ENCODE measurements at regions of chr10 and their contacts with region 1.

Region 1: GRCh38 chr10:63554657-63555056 is 33.5 kb downstream of the REEP3 start:
- DNase-seq: peak; percentile 82
- H3K4me3 ChIP-seq: peak overlapping the region in 1 of 3 experiments; percentile 2
- H3K27ac ChIP-seq: peak overlapping the region; percentile 100
- H3K4me1 ChIP-seq: peaks cover 37% of the 10 kb centered on the region
- H3K27me3 ChIP-seq: no peaks in the 10 kb centered on the region
- CTCF ChIP-seq: no peak

Region 2: GRCh38 chr10:63396133-63396761 is 158.4 kb before region 1 on chr10:
- CTCF ChIA-PET with region 1: no interaction called
- dilution Hi-C with region 1: no loop called
- in situ Hi-C with region 1: no loop called
- intact Hi-C with region 1: no loop called
- DNase-seq: no peak
- H3K4me3 ChIP-seq: no peak overlapping the region
- H3K27ac ChIP-seq: no peak overlapping the region
- H3K4me1 ChIP-seq: no peaks in the 10 kb centered on the region
- H3K27me3 ChIP-seq: no peaks in the 10 kb centered on the region
- CTCF ChIP-seq: no peak

Region 3: GRCh38 chr10:63515002-63515763 is 39.5 kb before region 1 on chr10:
- CTCF ChIA-PET with region 1: no interaction called
- dilution Hi-C with region 1: loop called (anchors 5 kb)
- in situ Hi-C with region 1: no loop called
- intact Hi-C with region 1: loop called (anchors 1 kb)
- DNase-seq: peak; percentile 74
- H3K4me3 ChIP-seq: peak overlapping the region; percentile 3 to 35 (median 33)
- H3K27ac ChIP-seq: peak overlapping the region; percentile 94
- H3K4me1 ChIP-seq: peaks cover 36% of the 10 kb centered on the region
- H3K27me3 ChIP-seq: no peaks in the 10 kb centered on the region
- CTCF ChIP-seq: no peak

Region 4: GRCh38 chr10:63521416-63522276 is 33.0 kb before region 1 on chr10:
- CTCF ChIA-PET with region 1: no interaction called
- dilution Hi-C with region 1: loop called (anchors 5 kb)
- in situ Hi-C with region 1: no loop called
- intact Hi-C with region 1: loop called (anchors 1 kb)
- DNase-seq: peak; percentile 66
- H3K4me3 ChIP-seq: peak overlapping the region; percentile 91 to 95 (median 92)
- H3K27ac ChIP-seq: peak overlapping the region; percentile 90
- H3K4me1 ChIP-seq: peaks cover 27% of the 10 kb centered on the region
- H3K27me3 ChIP-seq: no peaks in the 10 kb centered on the region
- CTCF ChIP-seq: no peak

Region 5: DNA sequence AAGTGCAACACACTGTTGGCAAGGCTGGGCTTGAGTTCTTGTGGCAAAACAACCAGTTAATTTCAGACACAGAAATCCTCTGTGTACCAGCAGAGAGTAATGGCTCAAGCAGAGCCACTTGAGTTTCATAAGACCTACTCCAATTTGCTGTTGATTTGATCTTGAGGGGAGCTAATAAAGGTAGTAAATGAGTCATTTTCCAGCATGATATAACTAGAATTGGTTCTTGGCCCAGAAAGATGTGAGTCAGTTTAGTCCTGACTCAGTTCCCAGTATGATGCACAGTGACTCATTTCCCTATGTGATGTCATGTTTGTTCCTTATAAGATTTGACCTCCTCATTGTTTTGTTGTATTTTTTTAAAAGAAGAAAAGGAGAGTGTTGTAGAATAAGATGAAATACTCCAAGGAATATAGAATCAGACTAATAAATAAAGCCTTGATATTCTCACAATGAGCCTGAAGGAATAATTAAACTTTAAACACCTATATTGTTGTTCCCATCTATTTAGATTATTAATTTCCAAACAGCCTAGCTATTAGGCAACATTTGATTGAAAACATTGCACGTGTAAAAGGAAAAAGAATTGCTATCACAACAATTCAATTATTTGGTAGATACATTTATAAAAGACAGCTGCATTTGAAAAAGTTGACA is 152.7 kb after region 1 on chr10:
- CTCF ChIA-PET with region 1: no interaction called
- dilution Hi-C with region 1: no loop called
- in situ Hi-C with region 1: no loop called
- intact Hi-C with region 1: loop called (anchors 5 kb)
- DNase-seq: peak; percentile 99
- H3K4me3 ChIP-seq: no peak overlapping the region
- H3K27ac ChIP-seq: peak overlapping the region; percentile 80
- H3K4me1 ChIP-seq: peaks cover 31% of the 10 kb centered on the region
- H3K27me3 ChIP-seq: no peaks in the 10 kb centered on the region
- CTCF ChIP-seq: no peak

Measured in mammary epithelial cell (primary cell).